ENCODE measurements at regions of chr6 and their contacts with region 1.

Region 1: GRCh38 chr6:13302751-13303667 is 25.3 kb downstream of the TBC1D7 start:
- DNase-seq: peak; percentile 99 to 100 (median 100)
- H3K4me3 ChIP-seq: peak overlapping the region in 1 of 3 experiments; percentile 31
- H3K4me3 Mint-ChIP-seq: peak overlapping the region; percentile 34 to 75
- H3K27ac ChIP-seq: peak overlapping the region; percentile 96 to 97
- H3K27ac Mint-ChIP-seq: peak overlapping the region; percentile 97 to 100 (median 100)
- H3K4me1 ChIP-seq: peaks cover 34 to 36% of the 10 kb centered on the region in 2 donors
- H3K4me1 Mint-ChIP-seq: peaks cover 42% of the 10 kb centered on the region
- H3K27me3 ChIP-seq: no peaks in the 10 kb centered on the region
- H3K27me3 Mint-ChIP-seq: peaks cover 0 to 6% (median 0%) of the 10 kb centered on the region in 3 donors
- CTCF ChIP-seq: no peak

Region 2: DNA sequence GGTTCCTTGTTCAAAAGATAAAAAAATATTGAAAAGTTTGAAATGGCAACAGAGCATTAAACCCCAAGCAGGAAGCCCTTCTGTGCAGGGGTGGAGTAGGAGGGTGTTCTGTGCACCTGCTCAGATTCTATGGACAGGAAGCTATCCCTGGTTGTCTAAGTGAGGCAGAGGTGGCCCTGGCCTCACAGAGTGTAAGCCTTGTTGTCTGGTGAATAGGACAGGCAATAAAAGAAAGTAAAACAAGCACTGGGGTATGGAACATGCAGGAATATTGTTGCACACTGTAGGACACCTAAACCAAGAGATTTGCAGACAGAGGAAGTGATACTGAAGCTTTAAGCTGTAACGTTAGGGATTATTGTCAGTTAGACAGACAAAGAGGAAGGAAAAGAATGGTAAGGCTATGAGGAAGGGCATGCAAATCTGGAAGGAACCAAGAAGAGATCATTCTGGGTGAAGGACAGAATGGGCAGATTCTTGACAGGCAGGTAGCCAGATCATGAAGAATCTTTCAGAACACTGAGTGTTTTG is 41.5 kb before region 1 on chr6:
- intact Hi-C with region 1: loop called in 1 of 2 experiments (anchors 5 kb)
- DNase-seq: peak; percentile 72 to 86 (median 78)
- H3K4me3 ChIP-seq: peak overlapping the region in 2 of 3 experiments; percentile 11 to 63
- H3K4me3 Mint-ChIP-seq: peak overlapping the region; percentile 48 to 74
- H3K27ac ChIP-seq: peak overlapping the region; percentile 41 to 79
- H3K27ac Mint-ChIP-seq: peak overlapping the region; percentile 85 to 94 (median 88)
- H3K4me1 ChIP-seq: peaks cover 57 to 63% of the 10 kb centered on the region in 2 donors
- H3K4me1 Mint-ChIP-seq: peaks cover 58% of the 10 kb centered on the region
- H3K27me3 ChIP-seq: no peaks in the 10 kb centered on the region
- H3K27me3 Mint-ChIP-seq: no peaks in the 10 kb centered on the region
- CTCF ChIP-seq: no peak

Region 3: DNA sequence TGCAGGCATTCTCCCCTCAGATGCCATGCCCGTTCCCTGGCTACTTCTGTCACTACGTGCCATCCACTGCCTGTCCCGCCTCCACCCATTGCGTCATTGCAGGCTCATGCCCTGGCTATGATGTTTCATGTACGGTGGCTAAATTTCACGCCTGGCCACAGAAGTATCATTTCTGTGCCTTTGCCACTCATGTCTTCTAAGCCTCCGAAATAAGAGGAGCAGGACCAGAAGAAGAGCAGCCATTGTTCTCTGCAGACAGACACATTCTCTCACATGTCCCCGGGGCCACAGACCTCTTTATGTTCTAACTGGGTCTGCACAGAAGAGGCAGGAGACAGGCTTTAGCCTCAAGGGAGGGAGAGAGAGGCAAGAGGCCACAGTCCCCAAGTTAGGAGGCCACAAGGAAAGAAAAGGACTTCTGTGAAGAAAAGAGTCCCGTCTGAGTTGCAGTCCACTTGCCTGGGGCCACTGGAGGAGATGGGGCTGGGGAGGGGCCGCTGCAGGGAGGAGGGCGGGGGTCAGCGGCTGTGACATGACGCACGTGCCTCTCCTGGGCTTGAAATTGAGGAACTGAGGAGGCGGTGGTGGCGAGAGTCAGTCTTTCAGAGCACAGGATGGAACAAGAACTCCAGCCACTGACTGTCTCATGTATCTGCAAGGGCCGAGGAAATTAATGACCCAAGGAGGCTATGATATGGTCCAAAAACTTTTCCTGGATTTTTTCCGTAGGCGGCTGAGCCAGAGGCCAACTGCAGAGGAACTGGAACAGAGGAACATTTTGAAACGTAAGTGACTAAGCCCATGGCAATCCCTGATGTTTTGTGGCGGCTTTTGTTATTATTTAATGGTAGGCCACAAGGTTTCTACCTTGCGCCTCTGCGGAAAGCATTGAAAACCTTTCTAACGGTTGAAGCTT is 30.6 kb before region 1 on chr6:
- intact Hi-C with region 1: loop called (anchors 2 kb)
- DNase-seq: peak; percentile 88 to 96 (median 95)
- H3K4me3 ChIP-seq: peak overlapping the region; percentile 46 to 100 (median 74)
- H3K4me3 Mint-ChIP-seq: peak overlapping the region; percentile 93 to 94
- H3K27ac ChIP-seq: peak overlapping the region; percentile 84 to 92
- H3K27ac Mint-ChIP-seq: peak overlapping the region; percentile 97 to 99 (median 99)
- H3K4me1 ChIP-seq: peaks cover 64 to 73% of the 10 kb centered on the region in 2 donors
- H3K4me1 Mint-ChIP-seq: peaks cover 71% of the 10 kb centered on the region
- H3K27me3 ChIP-seq: no peaks in the 10 kb centered on the region
- H3K27me3 Mint-ChIP-seq: peaks cover 0 to 2% (median 0%) of the 10 kb centered on the region in 3 donors
- CTCF ChIP-seq: no peak